ENCODE measurements at regions of chr9 and their contacts with region 1.

Region 1: GRCh38 chr9:21395778-21396717 is 10.8 kb upstream of the IFNA2 start:
- H3K4me3 ChIP-seq: peak overlapping the region; percentile 68
- H3K27ac ChIP-seq: no peak overlapping the region
- H3K4me1 ChIP-seq: no peaks in the 10 kb centered on the region
- CTCF ChIP-seq: peak; percentile 84

Region 2: DNA sequence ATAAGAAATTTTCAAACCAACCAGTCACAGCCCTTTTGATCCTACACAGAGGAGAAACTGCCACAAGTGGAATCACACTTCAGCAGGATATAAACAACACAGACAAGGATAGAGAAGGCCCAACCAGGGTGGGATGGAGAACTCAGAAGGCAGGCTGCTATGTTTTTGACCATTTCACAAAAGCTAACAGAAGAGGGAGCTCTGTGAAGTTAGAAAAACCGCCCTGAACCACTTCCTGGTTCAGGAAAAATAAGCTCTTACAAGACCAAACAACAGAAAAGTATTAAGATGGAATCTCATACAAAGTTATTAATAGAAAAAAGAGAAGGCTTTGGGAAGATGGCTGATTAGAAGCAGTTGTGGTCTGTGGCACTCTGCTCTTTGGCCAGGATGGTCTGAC is 317.3 kb before region 1 on chr9:
- CTCF ChIA-PET with region 1: no interaction called
- POLR2A ChIA-PET with region 1: no interaction called
- H3K4me3 ChIP-seq: no peak overlapping the region
- H3K27ac ChIP-seq: no peak overlapping the region
- H3K4me1 ChIP-seq: no peaks in the 10 kb centered on the region
- CTCF ChIP-seq: no peak

Region 3: GRCh38 chr9:21210311-21210710 is 185.7 kb before region 1 on chr9:
- CTCF ChIA-PET with region 1: no interaction called
- POLR2A ChIA-PET with region 1: no interaction called
- H3K4me3 ChIP-seq: no peak overlapping the region
- H3K27ac ChIP-seq: no peak overlapping the region
- H3K4me1 ChIP-seq: no peaks in the 10 kb centered on the region
- CTCF ChIP-seq: no peak

Region 4: DNA sequence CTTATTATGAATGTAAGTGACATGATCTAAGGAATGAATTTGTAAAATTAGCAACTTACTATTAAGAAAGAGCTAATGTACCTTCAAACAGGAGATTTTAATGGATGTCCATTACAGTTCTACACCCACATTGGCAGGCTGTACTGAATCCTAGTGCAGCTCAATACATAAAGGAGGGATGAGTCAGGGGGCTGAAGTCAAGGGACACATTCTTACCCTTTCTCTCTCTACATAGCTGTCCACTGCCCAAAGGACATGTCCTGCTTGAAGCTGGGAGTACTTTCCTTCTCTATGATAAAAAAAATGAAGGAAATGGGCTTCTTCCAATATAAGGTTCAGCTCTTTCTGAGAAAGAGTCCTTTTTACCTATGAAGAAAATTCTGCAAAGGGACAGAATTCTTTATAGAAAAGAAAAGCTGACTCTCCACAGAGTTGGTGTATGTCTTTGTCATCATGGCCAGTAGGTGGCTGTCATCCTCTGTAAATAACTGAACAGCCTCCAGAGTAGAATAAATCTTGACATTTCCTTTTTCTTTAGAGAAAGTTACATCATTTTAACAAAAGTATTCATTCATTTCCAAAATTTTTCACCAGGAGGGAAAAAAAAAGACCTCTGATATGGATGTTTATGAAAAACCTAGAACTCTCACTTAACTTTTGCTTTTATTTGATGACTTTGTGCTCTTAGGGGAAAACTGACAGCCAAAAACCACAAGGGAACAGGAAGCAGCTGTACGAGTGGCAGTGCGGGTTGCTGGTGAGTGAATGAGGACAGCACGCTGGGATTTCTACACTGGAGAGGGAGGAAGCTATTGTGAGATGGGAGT is 143.1 kb before region 1 on chr9:
- CTCF ChIA-PET with region 1: interaction called, 33 read pairs
- POLR2A ChIA-PET with region 1: interaction called, 3 read pairs
- H3K4me3 ChIP-seq: no peak overlapping the region
- H3K27ac ChIP-seq: no peak overlapping the region
- H3K4me1 ChIP-seq: no peaks in the 10 kb centered on the region
- CTCF ChIP-seq: no peak

Region 5: DNA sequence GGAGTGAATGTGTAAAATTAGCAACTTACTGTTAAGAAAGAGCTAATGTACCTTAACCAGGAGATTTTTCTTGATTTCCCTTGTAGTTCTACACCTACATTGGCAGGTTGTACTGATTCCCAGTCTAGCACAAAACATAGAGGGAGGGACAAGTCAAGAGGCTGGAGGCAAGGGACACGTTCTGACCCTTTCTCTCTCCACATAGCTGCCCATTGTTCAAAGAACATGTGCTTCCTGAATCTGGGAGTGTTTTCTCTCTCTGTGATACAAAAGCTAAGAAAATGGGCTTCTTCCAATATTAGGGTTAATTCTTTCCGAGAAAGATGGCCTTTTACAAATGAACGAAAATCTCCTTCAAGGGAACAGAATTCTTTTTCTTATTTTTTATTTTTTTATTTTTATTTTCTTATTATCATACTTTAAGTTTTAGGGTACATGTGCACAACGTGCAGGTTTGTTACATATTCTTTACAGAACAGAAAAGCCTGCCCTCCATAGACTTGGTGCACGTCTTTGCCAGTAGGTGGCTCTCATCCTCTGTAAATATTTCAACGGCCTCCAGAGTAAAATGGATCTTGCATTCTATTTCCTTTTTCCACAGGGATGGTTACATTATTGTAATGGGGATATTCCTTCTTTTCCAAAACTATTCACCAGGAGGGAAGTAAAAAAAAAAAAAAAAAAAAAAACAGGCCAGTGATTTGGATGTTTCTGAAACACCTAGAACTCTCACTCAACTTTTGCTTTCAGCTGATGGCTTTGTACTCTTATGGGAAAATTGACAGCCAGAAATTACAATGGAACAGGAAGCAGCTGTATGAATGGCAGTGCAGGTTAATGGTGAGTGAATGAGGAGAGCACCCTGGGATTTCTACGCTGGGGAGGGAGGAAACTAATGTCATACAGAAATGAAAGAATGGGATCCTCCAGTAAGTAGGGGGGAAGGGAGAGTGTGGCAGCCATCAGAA is 77.8 kb before region 1 on chr9:
- CTCF ChIA-PET with region 1: interaction called, 23 read pairs
- POLR2A ChIA-PET with region 1: no interaction called
- H3K4me3 ChIP-seq: no peak overlapping the region
- H3K27ac ChIP-seq: no peak overlapping the region
- H3K4me1 ChIP-seq: no peaks in the 10 kb centered on the region; the same call in 1 of the 2 replicates
- CTCF ChIP-seq: no peak

Region 6: DNA sequence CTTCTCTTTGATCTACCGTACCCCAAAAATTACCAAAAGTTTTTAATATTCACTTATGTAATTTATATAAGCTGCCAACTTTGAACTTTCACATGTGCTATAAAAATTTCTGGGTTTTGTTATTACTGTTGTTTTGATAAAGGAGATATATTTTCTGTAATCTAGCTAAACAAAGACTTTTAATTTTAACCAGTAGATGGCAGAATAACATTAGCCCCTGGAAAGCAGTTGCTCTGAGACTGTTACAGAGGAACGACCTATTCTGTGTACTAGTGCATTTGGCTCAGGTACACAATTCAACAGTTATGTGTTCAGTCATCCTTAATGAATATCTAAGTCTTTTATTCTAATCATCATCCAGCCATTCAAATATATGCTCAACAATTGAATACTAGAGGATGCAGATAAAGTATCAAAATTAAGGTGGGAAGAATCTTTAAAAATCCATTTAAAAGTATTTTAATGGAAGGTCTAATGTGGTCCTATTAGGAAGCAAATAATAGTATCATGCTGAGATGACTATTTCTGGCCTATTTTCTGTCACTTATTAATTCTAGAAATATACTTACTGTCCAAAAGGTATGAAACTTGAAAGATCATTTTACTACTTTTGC is 69.4 kb before region 1 on chr9:
- CTCF ChIA-PET with region 1: interaction called, 25 read pairs
- POLR2A ChIA-PET with region 1: no interaction called
- H3K4me3 ChIP-seq: no peak overlapping the region
- H3K27ac ChIP-seq: no peak overlapping the region
- H3K4me1 ChIP-seq: peaks cover 1% of the 10 kb centered on the region; the same call in 1 of the 2 replicates
- CTCF ChIP-seq: no peak

Region 7: GRCh38 chr9:21334701-21335632 is 61.1 kb before region 1 on chr9 and contains the start of gene KLHL9:
- CTCF ChIA-PET with region 1: interaction called, 24 read pairs
- POLR2A ChIA-PET with region 1: interaction called, 3 read pairs
- H3K4me3 ChIP-seq: peak within 1 kb of the TSS; percentile 62
- H3K27ac ChIP-seq: peak within 1 kb of the TSS; percentile 98
- H3K4me1 ChIP-seq: peaks cover 15% of the 10 kb centered on the region
- CTCF ChIP-seq: peak; percentile 46; the same call in 1 of the 2 replicates

Region 8: GRCh38 chr9:21408817-21409216 is 12.8 kb after region 1 on chr9 and contains the start of gene IFNA8:
- CTCF ChIA-PET with region 1: interaction called, 28 read pairs
- POLR2A ChIA-PET with region 1: no interaction called
- H3K4me3 ChIP-seq: no peak within 1 kb of the TSS
- H3K27ac ChIP-seq: no peak within 1 kb of the TSS
- H3K4me1 ChIP-seq: no peaks in the 10 kb centered on the region
- CTCF ChIP-seq: no peak

Region 9: DNA sequence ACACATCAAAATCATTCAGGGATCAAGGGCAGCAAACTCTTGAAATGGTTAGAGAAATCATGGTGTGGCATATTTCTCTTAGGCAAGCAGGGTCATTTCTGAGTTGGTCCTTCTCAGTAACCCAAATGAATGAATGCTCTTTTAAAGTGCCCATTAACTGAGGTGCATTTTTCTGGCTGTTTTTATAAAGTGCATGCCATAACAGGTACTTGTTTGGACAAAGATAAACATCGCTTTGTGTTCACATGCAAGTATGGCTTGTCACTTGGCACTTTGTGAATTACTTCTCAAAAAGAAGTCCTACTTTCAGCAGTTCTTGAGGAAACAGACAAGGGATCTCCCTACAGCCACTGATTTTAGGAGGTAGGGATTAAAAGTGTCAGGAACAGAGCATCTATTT is 150.9 kb after region 1 on chr9:
- CTCF ChIA-PET with region 1: no interaction called
- POLR2A ChIA-PET with region 1: no interaction called
- H3K4me3 ChIP-seq: no peak overlapping the region
- H3K27ac ChIP-seq: no peak overlapping the region
- H3K4me1 ChIP-seq: peaks cover 17% of the 10 kb centered on the region
- CTCF ChIP-seq: no peak

Region 10: DNA sequence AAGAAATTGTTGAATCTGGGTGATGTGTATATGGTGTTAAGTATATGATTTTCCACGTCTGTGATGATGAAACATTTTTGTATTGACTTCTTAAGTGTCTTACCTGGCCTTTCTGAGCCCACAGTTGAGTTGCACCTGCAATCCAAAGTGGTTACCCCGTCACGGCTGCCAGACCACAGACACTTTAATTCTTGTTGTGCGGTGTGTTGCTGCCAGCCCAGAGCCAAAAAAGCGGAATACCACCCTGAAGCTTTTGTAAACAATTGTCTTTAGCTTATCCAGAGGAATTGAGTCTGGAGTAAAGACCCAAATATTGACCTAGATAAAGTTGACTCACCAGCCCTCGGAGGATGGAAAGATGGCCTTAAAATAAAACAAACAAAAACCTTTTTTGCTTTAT is 441.5 kb after region 1 on chr9:
- CTCF ChIA-PET with region 1: interaction called, 10 read pairs
- POLR2A ChIA-PET with region 1: no interaction called
- H3K4me3 ChIP-seq: no peak overlapping the region
- H3K27ac ChIP-seq: no peak overlapping the region
- H3K4me1 ChIP-seq: no peaks in the 10 kb centered on the region; the same call in 1 of the 2 replicates
- CTCF ChIP-seq: no peak